ENCODE measurements at regions of chr11 and their contacts with region 1.

Region 1: DNA sequence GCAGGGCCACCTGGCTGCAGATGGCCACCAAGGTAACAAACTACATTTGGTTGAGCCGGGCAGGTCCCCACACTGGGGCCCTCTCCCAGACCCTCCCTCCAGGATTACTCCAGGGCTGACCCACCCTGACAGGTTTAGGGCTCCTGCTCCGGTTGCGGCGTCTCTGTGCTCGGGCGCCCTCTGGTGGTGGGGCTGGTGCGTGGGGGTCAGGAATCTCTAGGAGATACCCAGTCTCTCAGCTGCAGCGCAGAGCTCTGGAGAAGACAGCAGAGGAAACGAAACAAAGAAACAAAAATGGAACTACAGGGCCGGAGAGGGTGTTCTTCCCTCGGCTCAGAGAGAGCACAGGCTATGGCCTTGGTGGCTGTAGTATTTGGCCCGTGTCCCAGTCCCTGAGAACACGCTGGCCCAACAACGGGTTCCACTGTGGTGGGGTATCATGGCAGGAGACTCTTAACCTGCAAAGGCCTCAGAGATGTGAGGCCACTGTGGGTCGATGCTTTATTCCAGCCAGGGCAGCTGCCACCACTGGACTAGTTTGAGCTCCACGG is 2.4 kb downstream of the C11orf96 start:
- DNase-seq: peak; percentile 92
- ATAC-seq: peak; percentile 33
- H3K4me3 Mint-ChIP-seq: peak overlapping the region; percentile 92
- H3K27ac Mint-ChIP-seq: no peak overlapping the region
- H3K4me1 Mint-ChIP-seq: peaks cover 33% of the 10 kb centered on the region
- H3K27me3 Mint-ChIP-seq: peaks cover 63% of the 10 kb centered on the region
- CTCF ChIP-seq: peak; percentile 92

Region 2: DNA sequence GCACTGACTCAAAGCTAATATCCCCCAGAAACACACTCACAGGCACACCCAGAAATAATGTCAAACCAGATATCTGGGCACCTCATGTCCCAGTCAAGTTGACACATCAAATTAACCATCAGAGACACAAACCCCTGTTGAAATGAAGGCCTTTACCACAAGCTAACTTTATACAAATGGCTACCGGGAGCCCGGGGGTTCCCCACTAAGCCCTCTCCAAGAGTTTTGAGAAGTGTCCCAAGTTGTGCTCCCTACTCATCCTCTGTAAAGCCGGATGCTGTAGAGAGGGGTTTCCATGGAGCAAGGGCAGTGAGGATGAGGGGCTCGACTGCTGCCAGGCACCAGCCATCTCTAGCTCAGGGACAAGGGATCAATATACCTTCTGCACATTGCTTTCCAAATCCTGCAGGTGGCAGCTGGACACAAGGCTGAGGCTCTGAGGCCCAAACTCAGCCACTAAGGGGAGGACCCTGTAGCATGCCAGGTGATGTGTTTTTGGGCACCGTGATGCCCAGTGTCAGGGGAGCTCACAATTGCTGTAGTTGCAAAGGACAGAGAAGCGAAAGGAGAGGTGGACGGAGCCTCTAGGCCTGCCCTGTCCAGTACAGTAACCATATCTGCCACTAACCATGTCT is 440.4 kb before region 1 on chr11:
- CTCF ChIA-PET with region 1: no interaction called
- POLR2A ChIA-PET with region 1: no interaction called
- DNase-seq: peak; percentile 44
- ATAC-seq: peak; percentile 91
- H3K4me3 Mint-ChIP-seq: no peak overlapping the region
- H3K27ac Mint-ChIP-seq: no peak overlapping the region
- H3K4me1 Mint-ChIP-seq: peaks cover 9% of the 10 kb centered on the region
- H3K27me3 Mint-ChIP-seq: peaks cover 10% of the 10 kb centered on the region
- CTCF ChIP-seq: no peak; the same call in 1 of the 2 replicates

Region 3: GRCh38 chr11:43736502-43737200 is 208.2 kb before region 1 on chr11:
- CTCF ChIA-PET with region 1: no interaction called
- POLR2A ChIA-PET with region 1: no interaction called
- DNase-seq: no peak
- ATAC-seq: no peak
- H3K4me3 Mint-ChIP-seq: no peak overlapping the region
- H3K27ac Mint-ChIP-seq: peak overlapping the region; percentile 26; the same call in 1 of the 2 replicates
- H3K4me1 Mint-ChIP-seq: peaks cover 56% of the 10 kb centered on the region
- H3K27me3 Mint-ChIP-seq: no peaks in the 10 kb centered on the region
- CTCF ChIP-seq: no peak

Region 4: DNA sequence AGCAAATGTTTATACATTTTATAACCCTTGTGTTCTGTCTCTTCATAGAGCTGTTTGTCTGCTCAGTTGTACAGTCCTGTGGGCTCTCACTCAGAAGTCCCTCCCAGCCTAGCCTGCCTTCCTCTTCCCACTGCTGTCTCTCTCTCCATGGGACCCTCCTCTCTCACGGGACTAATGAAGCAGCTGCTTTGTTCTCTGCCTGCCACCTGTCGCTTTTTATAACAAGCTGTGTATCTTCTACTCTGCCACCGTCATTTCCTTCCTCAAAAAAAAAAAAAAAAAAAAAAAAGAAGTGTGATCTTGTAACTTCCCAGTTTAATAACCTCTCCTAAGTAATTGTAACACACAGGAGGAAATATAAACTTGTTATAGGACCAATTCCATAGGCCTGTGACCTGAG is 156.4 kb before region 1 on chr11:
- CTCF ChIA-PET with region 1: no interaction called
- POLR2A ChIA-PET with region 1: no interaction called
- DNase-seq: no peak
- ATAC-seq: no peak
- H3K4me3 Mint-ChIP-seq: no peak overlapping the region
- H3K27ac Mint-ChIP-seq: no peak overlapping the region; the same call in 1 of the 2 replicates
- H3K4me1 Mint-ChIP-seq: no peaks in the 10 kb centered on the region
- H3K27me3 Mint-ChIP-seq: no peaks in the 10 kb centered on the region
- CTCF ChIP-seq: no peak

Region 5: GRCh38 chr11:43895601-43896000 is 49.2 kb before region 1 on chr11:
- CTCF ChIA-PET with region 1: interaction called, 65 read pairs
- POLR2A ChIA-PET with region 1: no interaction called
- DNase-seq: no peak
- ATAC-seq: no peak
- H3K4me3 Mint-ChIP-seq: no peak overlapping the region
- H3K27ac Mint-ChIP-seq: no peak overlapping the region
- H3K4me1 Mint-ChIP-seq: no peaks in the 10 kb centered on the region
- H3K27me3 Mint-ChIP-seq: no peaks in the 10 kb centered on the region
- CTCF ChIP-seq: no peak

Region 6: GRCh38 chr11:43933608-43934551 is 11.0 kb before region 1 on chr11:
- CTCF ChIA-PET with region 1: interaction called, 54 read pairs
- POLR2A ChIA-PET with region 1: interaction called, 3 read pairs
- DNase-seq: no peak
- ATAC-seq: peak; percentile 15; the same call in 1 of the 2 replicates
- H3K4me3 Mint-ChIP-seq: no peak overlapping the region
- H3K27ac Mint-ChIP-seq: no peak overlapping the region
- H3K4me1 Mint-ChIP-seq: peaks cover 6% of the 10 kb centered on the region
- H3K27me3 Mint-ChIP-seq: peaks cover 4% of the 10 kb centered on the region; the same call in 1 of the 2 replicates
- CTCF ChIP-seq: no peak

Region 7: GRCh38 chr11:44005063-44005701 is 60.3 kb after region 1 on chr11:
- CTCF ChIA-PET with region 1: interaction called, 10 read pairs
- POLR2A ChIA-PET with region 1: interaction called, 7 read pairs
- DNase-seq: no peak
- ATAC-seq: peak; percentile 32; the same call in 1 of the 2 replicates
- H3K4me3 Mint-ChIP-seq: no peak overlapping the region
- H3K27ac Mint-ChIP-seq: no peak overlapping the region
- H3K4me1 Mint-ChIP-seq: peaks cover 19% of the 10 kb centered on the region
- H3K27me3 Mint-ChIP-seq: no peaks in the 10 kb centered on the region
- CTCF ChIP-seq: no peak

Region 8: DNA sequence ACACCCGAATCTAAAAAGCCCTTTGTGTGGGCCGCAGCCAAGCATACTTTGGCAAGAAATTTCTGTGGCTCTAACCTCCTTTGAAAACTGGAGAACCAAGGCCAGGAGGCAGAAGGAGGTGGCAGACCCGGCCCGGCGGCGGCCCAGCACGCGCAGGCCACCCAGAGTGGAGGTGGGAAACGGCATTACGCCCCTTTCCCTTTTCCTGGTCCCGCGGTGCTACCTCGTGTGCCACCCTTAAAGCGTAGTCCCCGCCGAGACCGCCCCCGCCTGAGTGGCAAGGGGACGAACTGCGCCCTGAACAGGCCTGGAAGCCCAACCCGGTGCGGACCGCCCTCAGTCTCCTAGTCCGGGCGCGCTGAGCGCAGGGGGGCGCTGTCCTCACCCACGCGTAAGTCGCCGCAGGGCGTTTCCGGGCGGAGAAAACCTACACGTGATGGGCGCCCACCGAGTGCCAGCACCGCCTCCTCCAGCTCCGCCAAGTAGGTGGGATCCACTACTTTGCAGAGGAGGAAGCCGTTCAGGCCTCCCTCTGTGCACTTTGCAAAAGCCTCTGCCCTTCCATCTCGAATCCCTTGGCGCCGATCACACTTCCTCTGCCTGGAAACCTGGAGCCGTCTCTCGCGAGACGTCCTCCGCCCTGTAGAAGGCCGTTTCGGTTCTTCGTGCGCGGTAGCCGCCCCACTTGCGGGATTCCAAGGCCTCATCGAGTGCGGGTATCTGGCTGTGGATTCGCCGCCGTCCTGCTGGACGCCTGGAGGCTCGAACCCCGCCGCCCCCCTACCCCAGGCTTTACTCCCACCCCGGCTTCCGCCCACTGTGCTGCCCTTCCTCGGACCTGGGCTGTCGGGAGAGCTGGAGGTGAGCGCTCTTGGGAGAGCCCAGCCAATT is 121.2 kb after region 1 on chr11 and contains the start of gene ACCS:
- CTCF ChIA-PET with region 1: interaction called, 13 read pairs
- POLR2A ChIA-PET with region 1: no interaction called
- DNase-seq: peak; percentile 88
- ATAC-seq: peak; percentile 87
- H3K4me3 Mint-ChIP-seq: peak within 1 kb of the TSS; percentile 76
- H3K27ac Mint-ChIP-seq: peak within 1 kb of the TSS; percentile 82
- H3K4me1 Mint-ChIP-seq: peaks cover 33% of the 10 kb centered on the region
- H3K27me3 Mint-ChIP-seq: peaks cover 10% of the 10 kb centered on the region
- CTCF ChIP-seq: peak; percentile 62
- total RNA-seq, gene ACCS: 10.5 to 14.5 TPM (median 13.9 TPM) in 3 replicates

Measured in WTC11 (cell line).